ENCODE measurements at regions of chr11 and their contacts with region 1.

Region 1: GRCh38 chr11:44556735-44557409 is 8.6 kb upstream of the CD82 start:
- DNase-seq: no peak
- CTCF ChIP-seq: peak; percentile 88

Region 2: GRCh38 chr11:44235765-44236201 is 321.1 kb before region 1 on chr11:
- CTCF ChIA-PET with region 1: no interaction called
- POLR2A ChIA-PET with region 1: no interaction called
- DNase-seq: no peak
- CTCF ChIP-seq: no peak

Region 3: GRCh38 chr11:44400431-44400830 is 156.4 kb before region 1 on chr11:
- CTCF ChIA-PET with region 1: no interaction called
- POLR2A ChIA-PET with region 1: no interaction called
- DNase-seq: no peak
- CTCF ChIP-seq: no peak

Region 4: GRCh38 chr11:44574610-44575287 is 17.9 kb after region 1 on chr11:
- CTCF ChIA-PET with region 1: interaction called, 16 read pairs
- POLR2A ChIA-PET with region 1: interaction called, 4 read pairs
- DNase-seq: no peak
- CTCF ChIP-seq: no peak

Region 5: GRCh38 chr11:44627911-44628729 is 71.2 kb after region 1 on chr11:
- CTCF ChIA-PET with region 1: interaction called, 421 read pairs
- POLR2A ChIA-PET with region 1: no interaction called
- DNase-seq: peak; percentile 60
- CTCF ChIP-seq: no peak

Region 6: GRCh38 chr11:44634401-44635281 is 77.8 kb after region 1 on chr11:
- CTCF ChIA-PET with region 1: interaction called, 32 read pairs
- POLR2A ChIA-PET with region 1: no interaction called
- DNase-seq: peak; percentile 15
- CTCF ChIP-seq: no peak